Endothelial cell of umbilical vein (primary cell): ENCODE measurements at regions of chr12 and their contacts with region 1.

Region 1: GRCh38 chr12:6074979-6075585 is 49.4 kb downstream of the VWF start:
- DNase-seq: peak; percentile 49
- H3K4me3 ChIP-seq: no peak overlapping the region
- H3K27ac ChIP-seq: peak overlapping the region; percentile 80
- H3K4me1 ChIP-seq: peaks cover 86% of the 10 kb centered on the region
- H3K27me3 ChIP-seq: no peaks in the 10 kb centered on the region
- CTCF ChIP-seq: peak in 1 of 2 donors; percentile 5
- POLR2A ChIP-seq: peak; percentile 67

Region 2: GRCh38 chr12:6182116-6182898 is 107.2 kb after region 1 on chr12:
- CTCF ChIA-PET with region 1: interaction called, 7 read pairs
- POLR2A ChIA-PET with region 1: no interaction called
- dilution Hi-C with region 1: no loop called
- intact Hi-C with region 1: loop called (anchors 1 kb)
- DNase-seq: peak; percentile 89
- H3K4me3 ChIP-seq: no peak overlapping the region
- H3K27ac ChIP-seq: peak overlapping the region; percentile 96
- H3K4me1 ChIP-seq: peaks cover 53% of the 10 kb centered on the region
- H3K27me3 ChIP-seq: no peaks in the 10 kb centered on the region
- CTCF ChIP-seq: no peak
- POLR2A ChIP-seq: peak; percentile 52